GM13976 (cell line): ENCODE measurements at regions of chrX and their contacts with region 1.

Region 1: DNA sequence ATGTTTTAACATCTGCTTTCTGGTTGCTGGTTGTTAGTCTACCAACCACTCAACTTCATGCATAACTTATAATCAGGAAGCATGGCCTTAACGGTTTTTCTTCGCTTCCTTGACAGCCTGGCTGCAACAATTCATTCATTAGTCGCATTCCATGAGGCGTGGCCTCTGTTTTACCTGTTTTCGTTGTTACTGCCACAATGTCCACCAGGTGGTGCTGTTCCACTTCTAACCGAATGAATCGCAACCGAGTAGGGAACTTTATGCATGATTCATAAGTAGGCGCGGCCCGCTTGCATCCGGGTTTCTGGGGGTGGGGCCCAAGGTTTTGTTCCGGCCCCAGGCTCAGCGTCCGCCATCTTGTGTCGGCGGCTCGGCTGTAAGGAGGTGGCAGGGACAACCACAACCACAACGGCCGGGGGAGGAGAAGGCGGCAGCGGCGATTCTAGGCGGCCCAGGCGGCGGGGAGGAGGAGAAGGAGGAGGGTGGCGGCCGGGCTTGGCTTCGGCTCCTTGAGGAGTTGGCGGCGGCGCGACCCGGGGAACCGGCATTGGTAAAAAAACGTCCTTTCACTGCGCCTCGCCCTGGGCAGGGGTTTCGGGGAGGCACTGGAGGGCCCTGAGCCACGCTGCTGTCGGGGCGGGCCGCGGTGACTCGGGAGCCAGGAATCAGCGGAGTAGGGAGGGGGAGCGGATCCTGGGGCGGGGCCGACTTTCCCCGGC is at the start of gene UBA1:
- DNase-seq: peak; percentile 91
- CTCF ChIP-seq: peak; percentile 86

Region 2: DNA sequence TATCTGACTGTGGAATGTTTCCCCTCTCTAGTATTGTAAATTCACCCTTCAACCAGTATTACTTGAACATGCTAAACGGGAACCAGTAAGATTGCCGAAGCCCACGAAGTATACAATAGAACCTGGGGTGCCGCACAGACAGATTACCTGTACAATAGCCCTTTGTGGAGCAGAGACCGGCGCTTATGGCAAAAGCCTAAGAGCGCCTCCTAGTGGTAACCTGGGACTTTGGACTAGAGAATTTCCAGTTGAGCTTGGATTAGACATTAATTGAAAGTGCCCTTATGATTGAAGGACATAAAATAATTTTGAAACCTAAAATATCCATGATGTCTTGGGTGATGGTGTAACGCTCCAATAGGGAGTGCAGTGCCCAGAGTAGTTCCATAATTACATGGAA is 190.9 kb after region 1 on chrX:
- in situ Hi-C with region 1: loop called (anchors 10 kb)
- DNase-seq: peak; percentile 37
- CTCF ChIP-seq: peak; percentile 58

Region 3: GRCh38 chrX:47523297-47523696 is 329.7 kb after region 1 on chrX:
- in situ Hi-C with region 1: loop called (anchors 10 kb)
- DNase-seq: peak; percentile 88
- CTCF ChIP-seq: peak; percentile 69